Naive thymus-derived CD4-positive, alpha-beta T cell (primary cell): ENCODE measurements at regions of chr22 and their contacts with region 1.

Region 1: DNA sequence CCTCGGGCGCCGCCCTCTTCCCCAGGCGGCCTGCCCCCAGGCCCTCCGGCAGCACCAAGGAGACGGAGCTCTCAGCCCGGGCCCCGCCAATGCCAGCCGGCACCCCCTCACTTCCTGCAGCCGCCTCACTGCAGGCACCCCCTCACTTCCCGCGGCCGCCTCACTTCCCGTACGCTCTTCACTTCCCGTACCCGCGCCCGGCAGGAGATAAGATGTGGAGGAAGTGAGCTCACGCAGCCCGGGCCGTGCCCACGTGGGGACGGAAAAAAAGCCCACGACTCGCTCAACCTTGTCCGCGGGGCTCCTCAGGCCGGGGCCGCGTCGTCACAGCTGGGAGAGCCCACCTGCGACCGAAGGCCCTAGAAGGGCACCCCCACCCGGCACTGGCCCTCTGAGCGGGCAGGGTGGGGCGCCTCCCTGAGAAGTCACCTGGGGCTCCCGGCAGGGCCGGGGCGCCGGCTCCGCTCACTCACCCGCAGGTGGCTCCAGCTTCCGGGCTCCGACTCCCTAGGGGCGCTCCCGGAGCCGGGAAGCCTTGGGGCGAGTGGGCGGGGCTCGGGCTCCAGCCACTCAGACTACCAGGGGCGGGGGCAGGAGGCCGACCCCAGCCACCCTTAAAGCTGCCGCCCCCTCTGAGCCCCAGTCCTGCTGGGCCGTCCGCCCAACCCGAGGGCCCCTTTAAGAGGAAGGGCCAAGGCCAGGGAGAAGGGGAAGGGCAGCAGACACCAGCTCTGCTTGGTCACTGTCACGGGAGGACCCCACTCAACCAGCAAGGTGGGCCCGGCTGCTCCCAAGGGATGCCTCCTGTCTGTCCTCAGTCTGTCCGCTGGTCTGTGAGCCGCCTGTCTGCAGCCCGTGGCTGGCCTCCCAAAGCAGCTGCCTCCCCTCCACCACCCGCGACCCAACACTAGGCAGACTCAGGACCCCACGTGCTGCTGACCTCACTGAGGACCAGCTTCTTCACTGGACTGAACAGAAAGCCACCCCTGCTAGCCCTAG is 31.4 kb downstream of the PISD start:
- DNase-seq: peak; percentile 71 to 90 (median 89)
- ATAC-seq: peak; percentile 92
- H3K4me3 ChIP-seq: peak overlapping the region; percentile 74
- H3K4me3 Mint-ChIP-seq: peak overlapping the region; percentile 80 to 92 (median 88)
- H3K27ac ChIP-seq: peak overlapping the region; percentile 95
- H3K27ac Mint-ChIP-seq: peak overlapping the region; percentile 89 to 96 (median 93)
- H3K4me1 ChIP-seq: peaks cover 16 to 19% of the 10 kb centered on the region in 2 donors
- H3K4me1 Mint-ChIP-seq: peaks cover 18 to 58% (median 38%) of the 10 kb centered on the region in 7 donors
- H3K27me3 ChIP-seq: no peaks in the 10 kb centered on the region
- H3K27me3 Mint-ChIP-seq: no peaks in the 10 kb centered on the region

Region 2: DNA sequence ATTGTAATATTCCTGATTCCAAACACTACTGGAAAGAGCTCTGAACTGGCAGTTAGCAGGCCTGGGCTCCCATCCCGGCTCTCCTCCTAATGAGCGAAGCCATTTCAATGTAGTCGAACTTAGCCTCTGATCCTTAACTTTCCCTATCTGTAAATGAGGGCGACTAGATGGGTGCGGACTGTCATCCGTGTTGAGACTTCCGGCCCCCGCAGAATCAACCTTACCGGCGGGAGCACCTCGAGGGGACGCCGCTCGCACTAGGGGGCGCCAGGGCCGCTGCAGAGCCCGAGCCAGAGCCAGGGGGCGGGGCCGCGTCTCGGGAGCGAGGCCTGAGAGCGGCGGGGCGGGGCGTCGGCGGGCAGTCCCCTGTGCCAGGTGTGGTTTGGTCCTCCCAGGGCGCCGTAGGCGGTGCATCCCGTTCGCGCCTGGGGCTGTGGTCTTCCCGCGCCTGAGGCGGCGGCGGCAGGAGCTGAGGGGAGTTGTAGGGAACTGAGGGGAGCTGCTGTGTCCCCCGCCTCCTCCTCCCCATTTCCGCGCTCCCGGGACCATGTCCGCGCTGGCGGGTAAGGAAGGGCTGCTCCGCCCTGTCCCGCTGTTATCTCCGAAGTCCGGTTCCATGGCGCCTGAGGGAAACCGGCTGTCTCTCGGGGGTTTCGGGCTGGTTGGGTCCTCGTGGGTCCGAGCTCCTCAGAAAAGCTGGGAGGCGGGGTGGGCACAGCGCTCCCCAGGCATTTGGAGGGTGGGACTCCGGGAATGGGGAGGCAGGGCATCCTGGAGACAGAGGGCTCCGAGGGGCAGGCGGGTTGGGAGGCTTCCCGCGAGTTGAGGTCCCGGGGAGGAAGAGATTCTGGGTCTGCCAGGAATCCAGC is 418.5 kb before region 1 on chr22 and contains the start of gene LIMK2:
- CTCF ChIA-PET with region 1: no interaction called
- POLR2A ChIA-PET with region 1: no interaction called
- intact Hi-C with region 1: loop called in 1 of 2 experiments (anchors 5 kb)
- DNase-seq: peak; percentile 90 to 99 (median 95)
- ATAC-seq: peak; percentile 100
- H3K4me3 ChIP-seq: peak within 1 kb of the TSS; percentile 83
- H3K4me3 Mint-ChIP-seq: peak within 1 kb of the TSS; percentile 86 to 91 (median 88)
- H3K27ac ChIP-seq: peak within 1 kb of the TSS; percentile 82
- H3K27ac Mint-ChIP-seq: peak within 1 kb of the TSS; percentile 82 to 96 (median 89)
- H3K4me1 ChIP-seq: peaks cover 23 to 31% of the 10 kb centered on the region in 2 donors
- H3K4me1 Mint-ChIP-seq: peaks cover 38 to 72% (median 51%) of the 10 kb centered on the region in 7 donors
- H3K27me3 ChIP-seq: no peaks in the 10 kb centered on the region
- H3K27me3 Mint-ChIP-seq: no peaks in the 10 kb centered on the region
- total RNA-seq, gene LIMK2: 18.3 to 49.9 (median 28.8) TPM

Region 3: DNA sequence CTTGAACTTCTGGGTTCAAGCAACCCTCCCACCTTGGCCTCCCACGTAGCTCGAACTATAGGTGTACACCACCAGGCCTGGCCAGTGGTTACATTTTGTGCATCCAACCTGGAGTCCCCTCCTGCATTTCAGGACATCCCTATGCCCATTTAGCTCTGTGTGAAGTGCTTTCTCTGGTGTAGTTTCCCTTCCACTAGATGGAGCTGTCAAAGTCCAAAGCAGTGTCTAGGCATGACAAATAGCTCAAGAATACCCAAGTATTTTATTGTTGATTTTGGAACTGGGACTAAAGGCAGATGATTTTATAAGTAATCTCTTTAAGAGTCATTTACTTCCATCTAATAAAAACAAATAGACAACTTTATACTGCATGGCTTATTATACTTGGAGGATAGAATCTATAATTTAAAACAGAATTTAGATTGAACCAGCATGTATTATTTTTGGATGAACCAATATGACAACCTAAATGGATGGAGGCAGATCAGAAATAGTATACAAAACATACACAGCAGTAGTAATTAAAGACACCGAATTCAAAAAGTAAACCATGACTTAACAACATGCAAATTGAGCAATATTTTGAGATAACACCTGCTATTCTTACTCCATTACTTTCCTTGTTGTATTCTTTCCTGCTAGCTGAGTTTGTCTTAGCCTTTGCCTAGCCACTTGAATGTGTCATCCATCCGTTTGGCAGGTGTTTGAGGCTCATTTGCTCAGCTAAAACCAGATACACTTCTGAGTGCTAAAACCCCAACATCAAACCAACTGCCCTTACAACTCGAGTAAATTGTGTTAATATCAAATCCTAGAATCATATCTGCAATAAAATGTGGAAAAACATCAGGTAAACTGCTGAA is 178.7 kb before region 1 on chr22:
- CTCF ChIA-PET with region 1: interaction called, 7 read pairs
- POLR2A ChIA-PET with region 1: interaction called, 4 read pairs
- intact Hi-C with region 1: loop called (anchors 1 kb)
- DNase-seq: peak in 5 of 9 donors; percentile 12 to 31 (median 21)
- ATAC-seq: peak; percentile 63
- H3K4me3 ChIP-seq: no peak overlapping the region
- H3K4me3 Mint-ChIP-seq: no peak overlapping the region
- H3K27ac ChIP-seq: no peak overlapping the region
- H3K27ac Mint-ChIP-seq: peak overlapping the region in 7 of 9 donors; percentile 4 to 59 (median 28)
- H3K4me1 ChIP-seq: no peaks in the 10 kb centered on the region
- H3K4me1 Mint-ChIP-seq: peaks cover 0 to 4% (median 0%) of the 10 kb centered on the region in 7 donors
- H3K27me3 ChIP-seq: no peaks in the 10 kb centered on the region
- H3K27me3 Mint-ChIP-seq: no peaks in the 10 kb centered on the region

Region 4: DNA sequence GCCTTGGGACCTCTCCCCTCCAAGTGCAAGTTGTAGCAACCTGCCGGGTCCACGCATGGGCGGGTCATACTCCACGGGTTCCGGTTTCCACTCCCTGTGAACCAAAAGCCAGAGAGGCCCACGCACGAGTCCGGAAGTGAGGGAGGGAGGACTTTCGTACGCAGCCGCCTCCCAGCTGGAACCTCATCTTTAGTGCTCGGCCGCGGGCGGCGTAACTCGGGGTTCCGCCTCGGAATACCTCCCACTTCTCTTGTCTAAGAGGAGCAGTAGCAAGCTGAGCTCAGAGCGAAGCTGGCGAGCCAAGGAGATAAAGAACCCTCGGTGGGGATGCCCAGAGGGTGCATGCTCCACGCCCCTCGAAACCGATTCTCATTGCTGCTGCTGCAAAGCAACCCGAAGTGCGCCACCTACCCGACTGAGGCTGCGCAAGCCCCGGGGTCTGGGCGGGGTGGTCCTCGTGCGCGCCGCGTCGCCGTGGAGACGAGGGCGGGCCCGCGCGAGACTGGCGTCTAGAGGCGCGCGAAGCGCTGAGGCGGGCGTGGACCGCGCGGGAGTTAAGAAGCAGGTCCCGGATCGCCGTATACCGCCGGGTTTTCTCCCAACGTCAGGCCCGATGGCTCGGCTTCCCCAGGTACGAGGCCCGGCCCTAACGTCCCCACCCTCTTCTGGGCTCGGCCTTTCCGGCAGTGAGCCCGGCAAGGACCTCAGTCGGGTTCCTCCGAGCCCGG is 134.5 kb before region 1 on chr22 and contains the start of gene SFI1:
- CTCF ChIA-PET with region 1: no interaction called
- POLR2A ChIA-PET with region 1: interaction called, 6 read pairs
- intact Hi-C with region 1: loop called (anchors 1 to 2 kb)
- DNase-seq: peak; percentile 91 to 98 (median 96)
- ATAC-seq: peak; percentile 93
- H3K4me3 ChIP-seq: peak within 1 kb of the TSS; percentile 83
- H3K4me3 Mint-ChIP-seq: peak within 1 kb of the TSS; percentile 85 to 99 (median 96)
- H3K27ac ChIP-seq: peak within 1 kb of the TSS; percentile 92
- H3K27ac Mint-ChIP-seq: peak within 1 kb of the TSS; percentile 92 to 99 (median 98)
- H3K4me1 ChIP-seq: peaks cover 18 to 20% of the 10 kb centered on the region in 2 donors
- H3K4me1 Mint-ChIP-seq: peaks cover 7 to 50% (median 43%) of the 10 kb centered on the region in 7 donors
- H3K27me3 ChIP-seq: no peaks in the 10 kb centered on the region
- H3K27me3 Mint-ChIP-seq: no peaks in the 10 kb centered on the region
- total RNA-seq, gene SFI1: 196 to 359 (median 343) TPM

Region 5: GRCh38 chr22:31583861-31584485 is 46.7 kb before region 1 on chr22:
- CTCF ChIA-PET with region 1: interaction called, 3 read pairs
- POLR2A ChIA-PET with region 1: no interaction called
- intact Hi-C with region 1: loop called in 1 of 2 experiments (anchors 2 kb)
- DNase-seq: no peak
- ATAC-seq: no peak
- H3K4me3 ChIP-seq: no peak overlapping the region
- H3K4me3 Mint-ChIP-seq: peak overlapping the region in 6 of 10 donors; percentile 4 to 66 (median 46)
- H3K27ac ChIP-seq: peak overlapping the region; percentile 49
- H3K27ac Mint-ChIP-seq: peak overlapping the region; percentile 33 to 88 (median 64)
- H3K4me1 ChIP-seq: peaks cover 11 to 35% of the 10 kb centered on the region in 2 donors
- H3K4me1 Mint-ChIP-seq: peaks cover 26 to 49% (median 41%) of the 10 kb centered on the region in 7 donors
- H3K27me3 ChIP-seq: no peaks in the 10 kb centered on the region
- H3K27me3 Mint-ChIP-seq: no peaks in the 10 kb centered on the region

Region 6: GRCh38 chr22:31891366-31892079 is 260.9 kb after region 1 on chr22:
- CTCF ChIA-PET with region 1: no interaction called
- POLR2A ChIA-PET with region 1: no interaction called
- intact Hi-C with region 1: no loop called
- DNase-seq: no peak
- ATAC-seq: no peak
- H3K4me3 ChIP-seq: no peak overlapping the region
- H3K4me3 Mint-ChIP-seq: no peak overlapping the region
- H3K27ac ChIP-seq: no peak overlapping the region
- H3K27ac Mint-ChIP-seq: no peak overlapping the region
- H3K4me1 ChIP-seq: no peaks in the 10 kb centered on the region
- H3K4me1 Mint-ChIP-seq: peaks cover 0 to 6% (median 0%) of the 10 kb centered on the region in 7 donors
- H3K27me3 ChIP-seq: no peaks in the 10 kb centered on the region
- H3K27me3 Mint-ChIP-seq: no peaks in the 10 kb centered on the region